Activated CD8-positive, alpha-beta memory T cell treated with anti-CD3 and anti-CD28 coated beads, Interleukin-2, amount 10 ng/mL, durations not matched to agents 7 days and 5 days (primary cell): ENCODE measurements at regions of chr3 and their contacts with region 1.

Region 1: GRCh38 chr3:194573691-194574437 is 59.4 kb downstream of the TMEM44 start:
- DNase-seq: peak; percentile 54
- ATAC-seq: peak; percentile 85
- H3K4me3 Mint-ChIP-seq: no peak overlapping the region
- H3K27ac Mint-ChIP-seq: no peak overlapping the region
- H3K4me1 Mint-ChIP-seq: peaks cover 8% of the 10 kb centered on the region
- H3K27me3 Mint-ChIP-seq: peaks cover 30% of the 10 kb centered on the region

Region 2: DNA sequence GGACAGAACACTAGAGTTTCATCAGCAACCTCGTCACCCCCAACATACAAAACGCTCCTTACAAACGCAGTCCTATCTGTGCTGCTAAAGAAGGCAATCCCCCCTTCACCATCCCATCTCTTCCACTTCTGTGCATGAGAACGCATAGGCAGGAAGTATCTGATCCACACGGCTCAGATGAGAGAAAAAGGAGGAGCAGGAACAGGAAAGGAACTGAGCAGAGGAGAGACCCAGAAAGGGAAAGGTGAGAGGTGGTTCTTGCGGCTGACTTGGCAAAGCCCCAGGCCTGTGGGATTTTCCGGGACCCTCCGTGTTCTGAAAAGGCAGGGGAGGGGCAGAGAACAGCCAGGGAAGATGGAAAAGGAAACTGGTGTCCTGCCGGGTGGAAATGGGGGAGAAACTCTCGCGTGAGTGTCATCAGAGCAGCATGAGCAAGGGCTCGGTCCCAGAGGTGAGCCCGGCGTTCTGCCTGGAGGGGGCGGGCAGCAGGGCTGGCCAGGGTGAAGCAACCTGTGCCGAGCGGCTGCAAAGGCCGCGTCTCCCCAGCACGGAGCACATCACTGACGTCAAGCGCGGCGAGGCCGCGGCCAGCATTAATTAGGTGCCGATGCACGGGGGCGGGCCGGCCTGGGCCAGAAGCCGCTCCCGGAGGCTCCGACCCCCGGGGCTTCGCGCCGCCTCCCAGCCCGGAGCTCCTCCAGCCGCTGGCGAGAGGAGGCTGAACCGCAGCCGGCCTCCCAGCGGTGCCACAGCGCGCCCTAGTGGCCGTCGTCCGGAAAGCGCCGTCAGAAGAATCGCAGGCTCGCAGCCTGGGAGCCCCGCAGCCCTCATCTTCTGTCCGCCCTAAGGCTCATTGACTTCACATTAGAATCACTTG is 258.5 kb before region 1 on chr3:
- CTCF ChIA-PET with region 1: no interaction called
- DNase-seq: peak; percentile 86
- ATAC-seq: peak; percentile 84
- H3K4me3 Mint-ChIP-seq: peak overlapping the region; percentile 68
- H3K27ac Mint-ChIP-seq: peak overlapping the region; percentile 67
- H3K4me1 Mint-ChIP-seq: peaks cover 30% of the 10 kb centered on the region
- H3K27me3 Mint-ChIP-seq: peaks cover 80% of the 10 kb centered on the region

Region 3: GRCh38 chr3:194458131-194458530 is 115.7 kb before region 1 on chr3:
- CTCF ChIA-PET with region 1: interaction called, 11 read pairs
- DNase-seq: no peak
- ATAC-seq: no peak
- H3K4me3 Mint-ChIP-seq: no peak overlapping the region
- H3K27ac Mint-ChIP-seq: no peak overlapping the region
- H3K4me1 Mint-ChIP-seq: no peaks in the 10 kb centered on the region
- H3K27me3 Mint-ChIP-seq: no peaks in the 10 kb centered on the region